ENCODE measurements at regions of chr1 and their contacts with region 1.

Region 1: DNA sequence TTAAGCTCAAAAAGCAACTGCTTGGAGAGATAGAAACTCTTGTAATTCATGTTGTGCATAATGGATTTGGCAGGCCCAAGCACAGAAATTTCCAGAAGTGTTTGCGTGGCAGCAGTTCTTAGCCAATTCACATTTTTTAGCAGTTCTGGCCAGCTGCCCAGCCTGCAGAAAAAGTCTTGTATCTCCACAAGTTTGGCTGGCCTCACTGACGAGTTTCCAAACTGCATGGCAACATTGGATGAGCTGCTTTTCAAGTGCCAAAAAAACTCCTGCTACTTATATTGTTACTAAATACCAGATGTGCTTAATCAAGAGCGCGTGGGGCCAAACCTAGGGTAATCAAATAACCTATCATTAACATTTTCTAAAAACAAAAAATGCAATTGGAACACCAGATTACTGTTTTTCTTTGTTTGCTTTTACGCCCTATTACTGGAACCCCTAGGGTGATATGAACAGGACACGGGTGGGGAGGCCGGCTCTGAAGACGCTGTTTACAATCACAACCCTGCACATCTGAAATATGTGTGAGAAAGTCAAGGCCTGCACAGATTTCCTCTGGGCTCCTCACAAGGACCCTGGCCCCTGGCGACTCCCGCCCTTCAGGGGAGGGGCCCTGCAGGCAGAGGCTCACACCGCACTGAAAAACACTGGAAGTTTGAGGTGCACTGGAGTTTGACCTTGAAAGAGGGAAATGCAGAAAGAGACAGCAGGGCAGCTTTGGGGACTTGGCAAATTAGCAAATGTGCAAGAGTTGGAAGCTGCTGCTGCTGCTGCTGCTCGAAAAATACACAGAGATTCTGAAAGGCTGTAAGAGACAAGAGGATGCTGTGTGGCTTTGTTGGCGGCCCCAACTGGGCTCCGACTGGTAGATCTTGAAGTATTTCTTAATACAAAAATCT is 55.2 kb upstream of the TARBP1 start:
- DNase-seq: peak; percentile 98
- H3K4me3 ChIP-seq: peak overlapping the region in 1 of 4 donors; percentile 0
- H3K27ac ChIP-seq: peak overlapping the region; percentile 92 to 99 (median 96)
- H3K4me1 ChIP-seq: peaks cover 98 to 100% (median 99%) of the 10 kb centered on the region in 4 donors
- H3K27me3 ChIP-seq: no peaks in the 10 kb centered on the region
- CTCF ChIP-seq: no peak
- EP300 ChIP-seq: no peak
- POLR2A ChIP-seq: no peak

Region 2: GRCh38 chr1:234336359-234336758 is 197.9 kb before region 1 on chr1:
- intact Hi-C with region 1: no loop called
- DNase-seq: no peak
- H3K4me3 ChIP-seq: no peak overlapping the region
- H3K27ac ChIP-seq: no peak overlapping the region
- H3K4me1 ChIP-seq: no peaks in the 10 kb centered on the region
- H3K27me3 ChIP-seq: peaks cover 0 to 8% (median 0%) of the 10 kb centered on the region in 4 donors
- CTCF ChIP-seq: no peak
- EP300 ChIP-seq: no peak
- POLR2A ChIP-seq: no peak

Region 3: DNA sequence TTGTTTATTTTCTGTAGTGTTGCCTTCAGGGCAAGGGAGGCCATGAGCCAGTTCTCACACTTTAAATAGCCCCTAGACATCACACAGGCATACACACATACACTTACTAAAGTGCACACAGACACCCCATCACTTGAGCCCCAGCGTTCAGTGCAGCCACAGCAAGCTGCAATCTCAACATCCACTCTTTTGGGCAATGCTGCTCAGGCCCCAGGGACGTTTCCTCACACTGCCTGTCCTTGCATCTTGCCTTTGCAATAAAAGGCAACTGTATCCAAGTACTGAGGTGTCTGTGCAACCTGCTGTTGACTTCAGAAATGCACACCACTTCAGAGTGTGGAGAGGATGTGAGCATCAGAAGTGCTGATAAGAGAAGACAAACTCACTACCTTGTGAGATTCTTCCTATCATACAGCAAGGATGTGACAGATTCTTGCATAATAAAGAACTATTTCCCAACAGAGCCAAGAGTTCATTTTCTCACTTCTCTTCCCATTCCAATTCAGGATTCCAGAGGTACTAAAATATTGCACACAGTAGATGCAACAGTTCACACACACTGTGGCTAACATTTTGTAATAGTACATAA is 39.6 kb after region 1 on chr1:
- intact Hi-C with region 1: no loop called
- DNase-seq: no peak
- H3K4me3 ChIP-seq: no peak overlapping the region
- H3K27ac ChIP-seq: peak overlapping the region in 2 of 4 donors; percentile 12 to 13
- H3K4me1 ChIP-seq: peaks cover 8 to 15% (median 11%) of the 10 kb centered on the region in 4 donors
- H3K27me3 ChIP-seq: no peaks in the 10 kb centered on the region
- CTCF ChIP-seq: no peak
- EP300 ChIP-seq: no peak
- POLR2A ChIP-seq: no peak

Region 4: DNA sequence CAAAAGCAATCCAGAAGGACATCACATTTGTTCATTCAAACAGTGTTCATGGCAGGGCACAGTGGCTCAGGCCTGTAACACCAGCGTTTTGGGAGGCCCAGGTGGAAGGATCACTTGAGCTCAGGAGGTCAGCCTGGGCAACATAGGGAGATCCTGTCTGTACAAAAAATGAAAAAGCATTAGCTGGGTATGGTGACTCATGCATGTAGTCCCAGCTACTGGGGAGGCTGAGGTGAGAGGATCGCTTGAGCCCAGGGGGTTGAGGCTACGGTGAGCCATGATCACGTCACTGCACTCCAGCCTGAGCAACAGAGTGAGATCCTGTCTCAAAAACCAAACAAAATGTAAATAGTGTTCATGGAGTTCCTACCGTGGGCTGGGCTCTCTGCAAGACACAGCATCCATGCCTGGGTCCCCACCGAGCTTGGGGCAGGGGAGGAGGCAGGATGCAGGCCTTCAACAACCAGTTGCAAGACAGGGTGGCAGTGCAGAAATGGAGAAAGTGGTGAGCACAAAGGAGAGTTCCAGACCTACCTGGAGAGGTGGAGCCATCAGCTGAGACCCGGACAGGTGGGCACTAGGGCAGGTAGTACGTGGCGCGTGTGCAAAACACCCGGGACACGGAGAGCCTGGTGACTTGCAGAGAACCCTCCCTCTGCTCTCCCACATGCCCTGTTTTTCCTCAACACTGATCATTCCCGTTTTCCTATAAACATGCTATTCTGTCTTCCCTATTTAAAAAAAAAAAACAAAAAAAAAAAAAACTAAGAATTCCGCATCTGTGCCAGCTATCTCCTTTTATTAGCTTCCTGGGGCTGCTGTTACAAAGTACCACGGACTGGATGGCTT is 455.5 kb after region 1 on chr1:
- intact Hi-C with region 1: loop called (anchors 5 kb)
- DNase-seq: no peak
- H3K4me3 ChIP-seq: no peak overlapping the region
- H3K27ac ChIP-seq: peak overlapping the region; percentile 91 to 97 (median 94)
- H3K4me1 ChIP-seq: peaks cover 44 to 57% (median 54%) of the 10 kb centered on the region in 4 donors
- H3K27me3 ChIP-seq: no peaks in the 10 kb centered on the region
- CTCF ChIP-seq: no peak
- EP300 ChIP-seq: no peak
- POLR2A ChIP-seq: no peak

Measured in esophagus muscularis mucosa (tissue), 4 donors.